ENCODE measurements at regions of chr4 and their contacts with region 1.

Region 1: DNA sequence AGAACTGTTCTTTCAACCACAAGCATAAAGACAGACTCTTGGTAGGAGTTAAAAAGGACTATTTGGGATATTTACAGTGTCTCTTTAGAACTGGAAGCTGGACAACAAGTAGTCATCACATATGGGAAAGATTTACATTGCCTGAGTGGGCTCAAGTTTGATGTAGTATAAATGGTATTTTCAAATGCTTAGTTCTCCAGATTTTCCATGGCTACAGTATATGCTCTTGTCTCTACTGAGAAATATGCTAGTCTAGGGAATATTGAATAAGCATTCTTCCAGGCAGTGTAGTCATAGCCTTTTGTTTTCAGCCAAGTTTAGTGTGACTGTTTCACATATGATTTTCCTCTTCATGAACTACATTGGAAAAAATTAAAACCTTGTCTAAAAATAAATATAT is 315.6 kb downstream of the ARHGAP24 start:
- DNase-seq: no peak
- H3K4me3 ChIP-seq: no peak overlapping the region
- H3K27ac ChIP-seq: no peak overlapping the region
- H3K4me1 ChIP-seq: no peaks in the 10 kb centered on the region
- H3K27me3 ChIP-seq: no peaks in the 10 kb centered on the region
- CTCF ChIP-seq: no peak
- POLR2A ChIP-seq: no peak

Region 2: GRCh38 chr4:85707611-85708010 is 83.0 kb before region 1 on chr4:
- intact Hi-C with region 1: no loop called
- DNase-seq: no peak
- H3K4me3 ChIP-seq: no peak overlapping the region
- H3K27ac ChIP-seq: no peak overlapping the region
- H3K4me1 ChIP-seq: no peaks in the 10 kb centered on the region
- H3K27me3 ChIP-seq: no peaks in the 10 kb centered on the region
- CTCF ChIP-seq: no peak
- POLR2A ChIP-seq: no peak

Region 3: GRCh38 chr4:85979276-85979675 is 188.7 kb after region 1 on chr4:
- intact Hi-C with region 1: loop called (anchors 10 kb)
- DNase-seq: no peak
- H3K4me3 ChIP-seq: no peak overlapping the region
- H3K27ac ChIP-seq: no peak overlapping the region
- H3K4me1 ChIP-seq: no peaks in the 10 kb centered on the region
- H3K27me3 ChIP-seq: no peaks in the 10 kb centered on the region
- CTCF ChIP-seq: no peak
- POLR2A ChIP-seq: no peak

Region 4: GRCh38 chr4:86043755-86044592 is 253.4 kb after region 1 on chr4:
- intact Hi-C with region 1: loop called (anchors 10 kb)
- DNase-seq: peak; percentile 27 to 34
- H3K4me3 ChIP-seq: no peak overlapping the region
- H3K27ac ChIP-seq: peak overlapping the region in 1 of 3 donors; percentile 38
- H3K4me1 ChIP-seq: peaks cover 0 to 8% of the 10 kb centered on the region in 2 donors
- H3K27me3 ChIP-seq: no peaks in the 10 kb centered on the region
- CTCF ChIP-seq: peak; percentile 57 to 78 (median 70)
- POLR2A ChIP-seq: no peak

Measured in thyroid gland (tissue), 4 donors.